ENCODE measurements at regions of chrX and their contacts with region 1.

Region 1: DNA sequence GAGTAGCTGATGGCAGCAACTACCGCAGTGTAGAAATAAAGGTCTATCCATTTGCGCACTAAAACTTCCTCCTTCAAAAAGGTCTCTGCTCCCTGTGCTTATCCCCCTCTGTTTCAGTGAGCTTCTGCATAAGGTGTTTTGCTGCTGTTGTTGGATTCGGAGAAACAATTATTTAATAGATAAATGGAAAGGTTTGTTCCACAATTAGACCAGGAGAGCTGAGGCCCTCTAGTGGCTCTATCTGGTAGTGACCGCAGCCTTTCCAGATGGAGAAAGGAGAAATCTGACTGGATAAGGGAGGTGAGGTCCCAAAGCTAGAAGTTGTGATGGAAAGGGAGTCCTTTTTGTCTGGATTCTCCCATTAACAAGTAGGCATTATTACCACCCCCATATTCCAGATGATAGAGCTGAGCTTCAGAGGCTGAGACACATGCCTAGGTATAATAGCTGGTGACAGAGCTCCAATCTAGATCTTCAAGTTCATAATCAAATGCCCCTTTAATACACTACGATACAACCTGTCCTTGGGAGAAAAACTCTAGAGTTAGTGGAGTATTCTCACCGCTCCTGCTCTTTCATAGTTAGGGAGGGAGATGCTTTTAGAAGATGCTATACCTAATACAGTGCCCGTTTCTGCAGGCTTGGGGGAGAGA is 5.1 kb upstream of the GABRQ start:
- DNase-seq: peak; percentile 7

Region 2: DNA sequence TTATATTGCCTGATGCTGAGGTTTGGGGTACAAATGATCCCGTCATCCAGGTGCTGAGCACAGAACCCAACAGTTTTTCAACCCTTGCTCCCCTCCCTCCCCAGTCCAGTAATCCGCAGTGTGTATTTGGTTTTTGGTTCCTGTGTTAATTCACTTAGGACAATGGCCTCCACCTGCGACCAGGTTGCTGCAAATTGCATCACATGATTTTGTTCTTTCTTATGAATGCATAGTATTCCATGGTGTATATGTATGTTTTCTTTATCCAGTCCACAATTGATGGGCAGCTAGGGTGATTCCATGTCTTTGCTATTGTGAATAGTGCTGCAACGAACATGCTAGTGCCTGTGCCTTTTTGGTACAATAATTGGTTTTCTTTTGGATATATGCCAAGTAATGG is 30.5 kb after region 1 on chrX:
- in situ Hi-C with region 1: no loop called
- DNase-seq: no peak

Region 3: DNA sequence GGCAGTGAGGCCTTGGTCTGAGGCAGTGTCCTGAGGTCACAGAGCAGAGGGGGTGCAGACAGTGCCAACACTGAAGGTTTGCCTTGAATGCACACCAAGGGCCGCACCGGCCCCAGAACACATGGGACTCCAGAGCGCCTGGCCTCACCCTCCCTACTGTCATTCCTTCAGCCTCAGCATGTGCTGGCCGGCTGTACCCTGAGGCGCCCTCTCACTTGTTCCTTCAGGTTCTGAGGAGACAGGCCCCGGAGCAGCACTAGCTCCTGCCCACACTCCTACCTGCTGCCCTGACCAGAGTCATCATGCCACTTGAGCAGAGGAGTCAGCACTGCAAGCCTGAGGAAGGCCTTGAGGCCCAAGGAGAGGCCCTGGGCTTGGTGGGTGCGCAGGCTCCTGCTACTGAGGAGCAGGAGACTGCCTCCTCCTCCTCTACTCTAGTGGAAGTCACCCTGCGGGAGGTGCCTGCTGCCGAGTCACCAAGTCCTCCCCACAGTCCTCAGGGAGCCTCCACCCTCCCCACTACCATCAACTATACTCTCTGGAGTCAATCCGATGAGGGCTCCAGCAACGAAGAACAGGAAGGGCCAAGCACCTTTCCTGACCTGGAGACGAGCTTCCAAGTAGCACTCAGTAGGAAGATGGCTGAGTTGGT is 103.4 kb after region 1 on chrX:
- in situ Hi-C with region 1: no loop called
- DNase-seq: no peak

Region 4: GRCh38 chrX:152821145-152821765 is 188.7 kb after region 1 on chrX:
- in situ Hi-C with region 1: loop called (anchors 25 kb)
- DNase-seq: no peak